K562 (cell line): ENCODE measurements at regions of chr14 and their contacts with region 1.

Region 1: DNA sequence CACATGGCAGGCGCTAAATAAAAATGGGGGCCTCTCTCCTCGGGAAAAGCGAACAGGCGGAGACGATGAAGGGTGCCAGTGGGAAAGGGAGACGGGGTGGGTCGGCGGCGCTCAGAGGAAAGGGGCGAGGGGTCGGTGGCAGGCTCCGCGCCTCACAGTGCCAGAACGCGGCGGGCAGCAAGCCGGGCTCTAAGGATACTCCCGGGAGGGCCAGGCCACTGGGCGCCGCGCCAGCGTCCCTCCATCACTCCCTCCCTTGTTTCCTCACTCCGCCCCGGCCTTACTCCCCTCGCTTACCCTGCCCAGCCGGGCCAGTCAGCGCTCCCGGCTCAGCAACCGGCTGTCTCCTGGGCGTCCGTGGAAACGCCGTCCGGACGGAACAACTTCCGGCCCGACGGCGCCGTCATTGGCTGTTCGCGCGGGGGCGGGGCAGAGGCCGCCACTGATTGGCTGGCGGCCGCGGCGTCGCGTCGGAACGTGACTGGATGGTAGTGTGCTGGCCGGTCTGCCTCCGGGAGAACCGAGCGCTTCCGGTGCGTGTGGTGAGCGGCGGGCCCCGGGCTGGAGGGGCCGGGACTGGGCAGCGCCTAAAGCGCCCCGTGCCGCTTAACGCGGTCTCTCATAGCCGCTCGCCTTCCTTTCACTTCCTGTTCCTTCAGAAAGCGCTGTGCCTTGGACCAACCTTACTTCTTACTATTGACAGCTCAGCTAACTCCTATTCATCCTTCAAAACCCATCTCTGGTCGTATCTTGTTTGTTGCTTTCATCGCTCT is 53.0 kb downstream of the SLC25A47 start:
- DNase-seq: peak; percentile 84 to 95 (median 87)
- ATAC-seq: peak; percentile 86
- H3K4me3 ChIP-seq: peak within 1 kb of the TSS; percentile 81
- H3K27ac ChIP-seq: peak within 1 kb of the TSS; percentile 100
- H3K4me1 ChIP-seq: peaks cover 15 to 20% of the 10 kb centered on the region in 2 experiments; a peak in 4 of 5 replicates
- H3K27me3 ChIP-seq: no peaks in the 10 kb centered on the region
- CTCF ChIP-seq: no peak
- EP300 ChIP-seq: no peak
- POLR2A ChIP-seq: peak; percentile 83
- RAD21 ChIP-seq: no peak

Region 2: DNA sequence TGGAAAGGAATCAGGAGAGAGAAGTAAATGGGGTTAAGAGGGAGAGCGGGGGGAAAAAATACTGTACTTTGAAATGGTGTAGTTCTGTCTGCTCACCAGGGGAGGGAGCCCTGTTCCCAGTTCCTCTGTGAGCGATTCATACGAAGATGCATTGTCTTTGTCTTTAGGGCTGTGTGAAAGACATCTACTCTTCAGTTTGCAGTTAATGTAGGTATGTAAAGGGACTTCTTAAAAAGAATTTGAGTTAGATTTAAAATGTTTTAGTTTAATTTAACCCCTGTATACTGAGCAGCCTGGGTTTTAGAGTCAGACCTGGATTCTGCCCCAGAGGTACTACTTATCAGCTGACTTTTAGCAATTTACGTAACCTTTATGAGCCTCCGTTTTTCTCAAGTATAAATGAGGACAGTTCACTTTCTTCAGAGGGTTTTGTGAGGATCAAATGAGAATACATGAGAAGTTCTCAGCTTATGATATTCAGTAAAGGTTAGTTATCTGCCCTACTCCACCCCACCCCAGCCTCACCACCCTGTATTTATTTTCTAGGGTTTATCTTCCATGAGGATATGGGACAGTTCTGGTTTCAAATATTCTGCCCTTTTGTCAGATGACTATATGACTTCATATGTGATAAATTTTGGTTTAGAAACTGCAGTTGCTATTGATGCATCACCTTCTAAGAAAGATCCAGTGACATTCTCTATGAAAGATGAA is 393.5 kb before region 1 on chr14:
- CTCF ChIA-PET with region 1: no interaction called
- POLR2A ChIA-PET with region 1: no interaction called
- in situ Hi-C with region 1: no loop called
- intact Hi-C with region 1: loop called (anchors 10 kb)
- DNase-seq: peak; percentile 57 to 75 (median 64)
- ATAC-seq: peak; percentile 95
- H3K4me3 ChIP-seq: no peak overlapping the region
- H3K27ac ChIP-seq: no peak overlapping the region
- H3K4me1 ChIP-seq: peaks cover 2 to 7% of the 10 kb centered on the region in 2 experiments; a peak in 3 of 5 replicates
- H3K27me3 ChIP-seq: no peaks in the 10 kb centered on the region
- CTCF ChIP-seq: peak; percentile 72 to 80 (median 75)
- EP300 ChIP-seq: no peak
- POLR2A ChIP-seq: no peak
- RAD21 ChIP-seq: peak; percentile 80 to 86

Region 3: DNA sequence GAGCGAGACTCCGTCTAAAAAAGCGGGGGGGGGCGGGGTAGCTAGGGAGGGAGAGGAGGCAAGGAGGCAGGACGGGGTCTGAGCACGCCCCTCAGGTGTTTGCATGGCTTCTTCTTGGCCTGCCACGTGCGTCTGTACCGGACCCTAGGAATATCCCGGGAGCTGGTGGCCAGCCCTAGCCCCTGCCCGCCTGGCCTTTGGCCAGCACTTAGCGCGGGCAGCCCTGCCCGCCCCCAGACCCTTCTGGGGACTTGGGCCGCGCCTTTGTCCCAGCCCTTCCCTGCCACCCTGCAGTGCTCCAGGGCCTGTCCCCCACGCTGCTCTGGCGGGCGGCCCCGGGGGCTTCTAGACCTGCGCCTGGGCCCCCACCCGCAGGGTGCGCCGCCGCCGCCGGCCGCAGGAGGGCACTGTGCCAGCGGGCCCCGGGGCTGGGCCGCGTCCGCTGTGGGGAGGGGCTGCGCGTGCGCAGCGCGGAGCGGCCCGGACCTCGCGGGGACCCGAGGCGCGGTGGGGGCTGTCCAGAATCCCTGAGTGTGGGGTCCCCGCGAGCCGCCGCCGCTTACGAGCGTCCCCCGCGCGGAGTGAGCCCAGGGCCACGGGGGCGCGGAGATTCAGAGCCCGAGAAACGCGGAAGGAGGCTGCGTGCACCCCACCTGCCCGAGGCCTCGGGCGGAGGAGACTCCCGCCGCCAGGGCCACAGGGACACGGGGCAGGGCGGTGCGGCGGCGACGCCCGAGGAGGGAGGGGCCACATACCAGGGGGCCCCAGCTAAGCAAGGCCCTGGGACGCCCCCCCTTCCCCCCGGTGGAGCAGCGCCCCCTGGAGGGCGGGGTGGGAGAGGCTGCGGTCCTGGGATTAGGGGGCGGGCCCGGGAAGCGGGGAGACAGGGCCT is 90.9 kb before region 1 on chr14:
- CTCF ChIA-PET with region 1: no interaction called
- POLR2A ChIA-PET with region 1: interaction called, 6 read pairs
- in situ Hi-C with region 1: no loop called
- intact Hi-C with region 1: loop called (anchors 1 kb)
- DNase-seq: peak; percentile 78 to 96 (median 94)
- ATAC-seq: peak; percentile 94
- H3K4me3 ChIP-seq: peak overlapping the region; percentile 64
- H3K27ac ChIP-seq: peak overlapping the region; percentile 96
- H3K4me1 ChIP-seq: peaks cover 0 to 25% of the 10 kb centered on the region in 2 experiments; a peak in 3 of 5 replicates
- H3K27me3 ChIP-seq: no peaks in the 10 kb centered on the region
- CTCF ChIP-seq: peak in 2 of 3 experiments; percentile 77 to 85
- EP300 ChIP-seq: no peak
- POLR2A ChIP-seq: peak; percentile 74; the same call in 1 of the 2 replicates
- RAD21 ChIP-seq: peak; percentile 20 to 34; a peak in 3 of 4 replicates

Region 4: DNA sequence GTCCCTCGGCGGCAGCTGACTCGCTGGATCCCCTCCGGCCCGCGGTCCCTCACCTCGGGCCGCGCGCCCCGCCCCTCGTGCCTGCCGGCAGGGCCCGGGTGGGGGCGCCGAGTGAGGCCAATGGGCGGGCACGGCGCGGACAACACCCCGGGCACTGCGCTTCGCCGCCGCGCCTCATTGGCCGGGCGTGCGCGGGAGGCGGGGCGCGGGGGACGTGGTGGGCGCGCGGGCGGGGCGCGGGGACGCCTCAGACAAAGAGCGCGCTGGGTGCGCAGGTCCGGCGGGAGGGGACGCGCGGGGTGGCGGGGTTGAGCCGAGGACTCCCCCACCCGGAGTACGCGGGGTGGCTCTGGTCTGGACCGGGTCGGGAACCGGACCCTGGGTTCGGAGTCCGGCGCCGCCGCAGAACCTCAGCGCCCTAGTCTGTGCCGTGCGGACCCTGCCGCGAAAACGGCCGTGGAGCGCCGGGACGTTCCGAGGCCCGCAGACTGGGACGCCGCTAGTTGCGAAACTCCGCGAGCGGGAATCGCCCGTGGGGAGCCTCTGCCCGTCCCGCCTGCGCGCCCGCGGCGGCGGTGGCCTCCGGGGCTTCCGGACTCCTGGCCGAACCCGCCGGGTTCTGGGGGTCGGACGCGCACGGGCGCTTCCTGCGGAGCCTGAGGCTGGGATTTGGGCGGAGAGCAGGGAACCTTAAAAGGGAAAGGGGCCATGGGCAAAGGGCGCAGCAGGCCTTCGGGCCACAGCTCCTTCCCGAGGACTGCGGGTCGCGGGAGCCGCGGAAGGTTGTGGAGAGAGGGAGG is 69.5 kb before region 1 on chr14 and contains the start of gene SLC25A29:
- CTCF ChIA-PET with region 1: no interaction called
- POLR2A ChIA-PET with region 1: interaction called, 3 read pairs
- in situ Hi-C with region 1: no loop called
- intact Hi-C with region 1: loop called (anchors 5 kb)
- DNase-seq: peak; percentile 85 to 94 (median 93)
- ATAC-seq: peak; percentile 89
- H3K4me3 ChIP-seq: peak within 1 kb of the TSS; percentile 51
- H3K27ac ChIP-seq: no peak within 1 kb of the TSS
- H3K4me1 ChIP-seq: peaks cover 12 to 46% of the 10 kb centered on the region in 2 experiments; a peak in 4 of 5 replicates
- H3K27me3 ChIP-seq: no peaks in the 10 kb centered on the region
- CTCF ChIP-seq: no peak
- EP300 ChIP-seq: no peak
- POLR2A ChIP-seq: no peak
- RAD21 ChIP-seq: no peak
- polyA plus RNA-seq, gene SLC25A29: 0.07 to 0.25 TPM

Region 5: GRCh38 chr14:100348784-100349704 is 27.1 kb before region 1 on chr14:
- CTCF ChIA-PET with region 1: no interaction called
- POLR2A ChIA-PET with region 1: interaction called, 10 read pairs
- in situ Hi-C with region 1: no loop called
- intact Hi-C with region 1: loop called (anchors 1 kb)
- DNase-seq: no peak
- ATAC-seq: 0 out of 3 replicates have a peak, but pooled peaks have one; percentile 3
- H3K4me3 ChIP-seq: no peak overlapping the region
- H3K27ac ChIP-seq: no peak overlapping the region
- H3K4me1 ChIP-seq: peaks cover 0 to 5% of the 10 kb centered on the region in 2 experiments; a peak in 2 of 5 replicates
- H3K27me3 ChIP-seq: no peaks in the 10 kb centered on the region
- CTCF ChIP-seq: no peak
- EP300 ChIP-seq: no peak
- POLR2A ChIP-seq: no peak
- RAD21 ChIP-seq: no peak

Region 6: DNA sequence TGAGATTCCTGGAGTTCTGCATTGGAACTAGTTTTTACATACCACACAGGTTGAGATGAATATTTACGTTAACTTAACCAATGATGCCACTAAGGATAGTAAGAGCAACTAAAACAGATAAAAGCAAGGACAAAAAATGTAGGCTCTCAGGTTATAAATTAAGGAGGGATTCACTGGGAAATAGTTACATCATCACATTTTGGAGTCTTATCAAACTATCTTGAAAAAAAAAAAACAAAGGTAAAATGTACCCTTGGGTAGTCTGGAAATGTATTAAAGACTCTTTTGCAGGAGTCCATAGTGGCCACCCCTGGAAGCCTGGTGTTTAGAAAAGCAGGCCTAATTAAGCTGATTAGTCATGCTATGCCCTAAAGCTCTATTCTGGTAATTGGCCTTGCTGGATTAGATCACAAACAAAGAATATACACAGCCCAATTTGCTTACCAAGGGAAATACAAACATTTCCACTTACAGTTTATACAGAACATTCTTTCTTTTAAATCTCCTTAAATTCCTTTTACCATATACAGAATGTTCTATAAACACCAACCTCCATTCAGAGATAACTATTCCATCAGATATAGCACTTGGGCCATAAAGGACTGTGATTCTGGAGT is 13.7 kb before region 1 on chr14:
- CTCF ChIA-PET with region 1: no interaction called
- POLR2A ChIA-PET with region 1: interaction called, 27 read pairs
- in situ Hi-C with region 1: no loop called
- intact Hi-C with region 1: no loop called
- DNase-seq: no peak
- ATAC-seq: no peak
- H3K4me3 ChIP-seq: no peak overlapping the region
- H3K27ac ChIP-seq: no peak overlapping the region
- H3K4me1 ChIP-seq: no peaks in the 10 kb centered on the region
- H3K27me3 ChIP-seq: no peaks in the 10 kb centered on the region
- CTCF ChIP-seq: no peak
- EP300 ChIP-seq: no peak
- POLR2A ChIP-seq: no peak
- RAD21 ChIP-seq: no peak

Region 7: DNA sequence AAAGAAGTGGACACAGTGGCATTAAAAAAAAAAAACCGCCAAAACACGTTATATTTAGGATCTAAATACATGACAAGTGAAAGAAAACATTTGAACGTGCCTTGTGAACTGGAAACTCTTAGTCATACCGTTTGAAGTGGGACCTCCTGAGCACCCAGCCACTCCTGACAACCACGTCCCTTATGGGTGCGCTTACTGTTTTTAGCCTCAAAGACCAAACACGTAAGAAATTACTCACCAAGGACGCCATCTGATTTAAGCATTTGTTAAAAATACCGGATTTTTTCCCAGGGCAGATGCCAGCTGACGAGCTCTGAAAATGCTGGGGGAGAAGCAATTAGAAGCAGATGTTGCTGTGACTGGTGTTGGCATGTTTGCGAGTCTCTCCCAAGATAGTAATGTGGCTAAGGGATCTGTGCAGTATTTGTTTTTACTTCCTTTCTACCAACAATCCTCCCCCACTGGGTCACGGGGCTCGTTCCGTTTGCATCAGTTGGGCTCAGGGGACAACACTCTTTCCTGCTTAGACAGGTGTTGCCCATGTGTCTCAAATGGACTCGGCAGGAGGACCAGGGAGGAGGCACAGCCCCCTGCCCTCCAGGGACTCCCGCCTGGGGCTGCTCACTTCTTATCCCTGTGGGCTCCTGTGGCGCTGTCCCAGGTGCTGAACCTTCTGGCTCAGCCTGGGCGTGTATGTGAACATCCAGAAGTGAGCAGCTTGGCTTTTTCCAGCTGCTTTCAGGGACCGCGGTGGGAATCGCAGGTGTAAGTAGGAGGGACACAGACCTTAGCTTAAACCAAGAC is 110.1 kb after region 1 on chr14:
- CTCF ChIA-PET with region 1: no interaction called
- POLR2A ChIA-PET with region 1: no interaction called
- in situ Hi-C with region 1: no loop called
- intact Hi-C with region 1: no loop called
- DNase-seq: peak; percentile 67 to 72 (median 71)
- ATAC-seq: peak; percentile 92
- H3K4me3 ChIP-seq: no peak overlapping the region
- H3K27ac ChIP-seq: no peak overlapping the region
- H3K4me1 ChIP-seq: no peaks in the 10 kb centered on the region
- H3K27me3 ChIP-seq: no peaks in the 10 kb centered on the region
- CTCF ChIP-seq: no peak
- EP300 ChIP-seq: no peak
- POLR2A ChIP-seq: no peak
- RAD21 ChIP-seq: no peak